HEK293T (cell line): ENCODE measurements at regions of chr19 and their contacts with region 1.

Region 1: DNA sequence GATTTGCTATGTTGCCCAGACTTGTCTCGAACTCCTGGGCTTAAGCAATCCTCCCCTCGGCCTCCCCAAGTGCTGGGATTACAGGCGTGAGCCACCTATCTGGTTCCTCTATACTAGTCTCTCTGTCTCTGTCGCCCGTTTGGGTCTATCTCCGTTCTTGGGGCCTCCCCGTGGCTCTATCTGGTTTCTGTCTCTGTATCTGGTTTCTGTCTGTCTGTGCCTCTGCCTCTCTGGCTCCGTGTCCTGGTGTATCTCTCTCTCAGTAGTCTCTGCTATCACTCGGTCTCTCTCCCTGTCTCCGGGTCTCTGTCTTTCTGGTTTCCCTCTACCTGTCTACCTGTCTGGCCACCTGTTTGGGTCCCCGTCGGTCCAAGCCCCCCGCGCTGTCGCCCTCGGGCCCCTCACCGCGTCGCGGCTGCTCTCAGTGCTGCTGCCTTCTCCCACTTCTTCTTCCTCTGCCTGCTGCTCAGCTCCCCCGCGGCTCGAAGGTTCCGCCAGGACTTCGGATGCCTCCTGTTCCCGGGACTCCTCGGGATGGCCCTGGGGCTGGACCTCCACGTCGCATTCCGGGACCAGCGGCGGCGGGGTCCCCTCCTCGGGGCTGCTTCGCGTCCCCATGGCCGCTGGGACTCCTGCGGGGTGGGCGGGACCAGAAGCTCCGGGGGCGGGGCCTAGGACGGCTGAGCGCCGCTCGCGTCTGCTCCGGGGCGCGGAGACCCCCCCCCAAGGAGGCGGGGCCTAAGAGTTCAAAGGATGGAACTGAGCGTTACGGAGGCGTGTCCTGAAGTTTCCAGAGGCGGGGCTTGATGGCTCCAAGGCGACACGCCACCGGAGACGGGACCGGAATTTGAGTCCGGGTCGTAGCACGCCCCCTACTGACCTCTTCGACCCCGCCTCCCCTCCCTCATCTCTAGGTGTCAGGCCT is 783 bp downstream of the PHLDB3 start:
- DNase-seq: peak; percentile 98

Region 2: GRCh38 chr19:43463381-43464136 is 40.2 kb before region 1 on chr19:
- CTCF ChIA-PET with region 1: no interaction called
- POLR2A ChIA-PET with region 1: interaction called, 11 read pairs
- DNase-seq: peak; percentile 99